SK-N-SH (cell line): ENCODE measurements at regions of chr10 and their contacts with region 1.

Region 1: GRCh38 chr10:70903262-70903921 is 15.0 kb upstream of the PCBD1 start:
- DNase-seq: peak; percentile 85
- H3K4me3 ChIP-seq: no peak overlapping the region; a peak in 1 of 4 replicates
- H3K27ac ChIP-seq: peak overlapping the region in 1 of 2 experiments; percentile 12; a peak in 1 of 4 replicates
- H3K4me1 ChIP-seq: peaks cover 0 to 8% of the 10 kb centered on the region in 2 experiments; a peak in 1 of 4 replicates
- H3K27me3 ChIP-seq: no peaks in the 10 kb centered on the region
- CTCF ChIP-seq: peak; percentile 88
- EP300 ChIP-seq: no peak
- RAD21 ChIP-seq: peak; percentile 91

Region 2: DNA sequence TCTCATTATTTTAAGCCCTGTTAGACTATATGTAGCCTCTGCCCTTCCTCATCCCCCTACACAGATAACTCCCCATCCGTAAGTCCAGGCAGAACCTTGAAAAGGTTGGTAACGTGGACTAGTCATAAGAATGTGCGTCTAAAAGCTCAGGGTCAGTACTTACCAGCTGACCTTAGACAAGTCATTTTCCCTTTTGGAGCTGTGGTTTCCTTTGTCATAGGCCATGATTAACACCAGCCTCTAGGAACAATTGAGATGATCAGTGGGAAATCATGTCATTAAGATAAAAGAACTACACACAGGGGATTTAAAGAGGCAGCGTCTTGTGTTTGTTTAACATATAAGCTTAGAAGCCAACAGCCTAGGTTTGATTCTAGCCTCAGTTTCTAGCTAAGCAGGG is 302.1 kb after region 1 on chr10:
- CTCF ChIA-PET with region 1: interaction called, 48 read pairs
- POLR2A ChIA-PET with region 1: no interaction called
- DNase-seq: no peak
- H3K4me3 ChIP-seq: no peak overlapping the region
- H3K27ac ChIP-seq: no peak overlapping the region
- H3K4me1 ChIP-seq: peaks cover 0 to 41% of the 10 kb centered on the region in 2 experiments; a peak in 2 of 4 replicates
- H3K27me3 ChIP-seq: peaks cover 7% of the 10 kb centered on the region; the same call in 1 of the 2 replicates
- CTCF ChIP-seq: no peak
- EP300 ChIP-seq: no peak
- RAD21 ChIP-seq: no peak

Region 3: GRCh38 chr10:71234970-71235685 is 331.7 kb after region 1 on chr10:
- CTCF ChIA-PET with region 1: interaction called, 19 read pairs
- POLR2A ChIA-PET with region 1: no interaction called
- DNase-seq: peak; percentile 83
- H3K4me3 ChIP-seq: peak overlapping the region; percentile 6 to 46; a peak in 3 of 4 replicates
- H3K27ac ChIP-seq: peak overlapping the region; percentile 94 to 100
- H3K4me1 ChIP-seq: peaks cover 82 to 97% of the 10 kb centered on the region in 2 experiments
- H3K27me3 ChIP-seq: no peaks in the 10 kb centered on the region
- CTCF ChIP-seq: no peak
- EP300 ChIP-seq: peak; percentile 84 to 98
- RAD21 ChIP-seq: peak; percentile 38; the same call in 1 of the 2 replicates

Region 4: DNA sequence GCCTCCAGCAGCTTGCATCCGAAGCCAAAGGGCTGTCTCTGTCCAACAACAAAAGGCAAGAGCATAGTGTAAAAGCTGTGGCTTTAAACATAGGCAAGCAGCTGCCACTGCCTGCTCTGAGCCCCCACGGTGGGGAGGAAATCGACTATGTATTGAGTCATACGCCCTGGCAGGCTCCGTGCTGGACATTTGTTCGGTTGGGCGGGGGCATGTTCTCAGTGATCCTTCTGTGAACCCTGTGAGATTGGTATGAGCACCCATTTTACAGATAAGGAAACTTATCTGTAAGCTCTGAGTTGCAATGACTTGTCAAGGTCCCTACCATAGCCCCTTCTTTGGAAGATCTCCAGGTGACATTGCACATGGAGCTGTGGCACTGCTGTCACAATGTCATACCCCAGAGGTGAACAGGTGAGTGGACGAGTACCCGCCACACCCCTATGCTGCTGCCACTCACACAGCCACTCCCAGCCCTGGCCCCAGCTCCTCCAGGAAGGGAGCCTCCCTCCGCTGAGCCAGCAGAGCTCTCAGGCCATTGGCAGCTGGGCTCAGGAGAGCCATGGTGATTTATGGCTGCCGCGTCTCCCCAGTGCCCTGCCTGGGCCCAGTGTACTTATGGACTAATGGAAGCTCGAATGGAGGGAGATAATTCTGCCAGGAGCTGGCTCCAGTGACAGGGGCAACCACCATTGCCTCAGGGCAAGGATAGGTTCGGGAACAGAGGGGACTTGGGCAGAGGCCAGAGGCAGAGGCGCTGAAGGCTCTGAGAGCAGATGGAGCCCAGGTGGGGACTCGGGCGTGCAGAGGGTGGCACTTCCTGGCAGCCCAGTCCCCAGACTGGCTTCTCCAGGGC is 352.6 kb after region 1 on chr10:
- CTCF ChIA-PET with region 1: interaction called, 16 read pairs
- POLR2A ChIA-PET with region 1: no interaction called
- DNase-seq: peak; percentile 74
- H3K4me3 ChIP-seq: no peak overlapping the region
- H3K27ac ChIP-seq: peak overlapping the region; percentile 53 to 100
- H3K4me1 ChIP-seq: peaks cover 56 to 97% of the 10 kb centered on the region in 2 experiments
- H3K27me3 ChIP-seq: no peaks in the 10 kb centered on the region
- CTCF ChIP-seq: no peak
- EP300 ChIP-seq: peak in 1 of 2 experiments; percentile 81; a peak in 3 of 4 replicates
- RAD21 ChIP-seq: 0 out of 2 replicates have a peak, but pooled peaks have one; percentile 20

Region 5: GRCh38 chr10:71270301-71271220 is 367.2 kb after region 1 on chr10:
- CTCF ChIA-PET with region 1: interaction called, 25 read pairs
- POLR2A ChIA-PET with region 1: no interaction called
- DNase-seq: peak; percentile 72
- H3K4me3 ChIP-seq: no peak overlapping the region; a peak in 1 of 4 replicates
- H3K27ac ChIP-seq: peak overlapping the region; percentile 68 to 96; a peak in 3 of 4 replicates
- H3K4me1 ChIP-seq: peaks cover 54 to 90% of the 10 kb centered on the region in 2 experiments
- H3K27me3 ChIP-seq: no peaks in the 10 kb centered on the region
- CTCF ChIP-seq: peak; percentile 65
- EP300 ChIP-seq: no peak
- RAD21 ChIP-seq: peak; percentile 77

Region 6: GRCh38 chr10:71285180-71285545 is 381.8 kb after region 1 on chr10:
- CTCF ChIA-PET with region 1: interaction called, 43 read pairs
- POLR2A ChIA-PET with region 1: no interaction called
- DNase-seq: peak; percentile 85
- H3K4me3 ChIP-seq: no peak overlapping the region
- H3K27ac ChIP-seq: no peak overlapping the region; a peak in 1 of 4 replicates
- H3K4me1 ChIP-seq: peaks cover 0 to 22% of the 10 kb centered on the region in 2 experiments; a peak in 2 of 4 replicates
- H3K27me3 ChIP-seq: no peaks in the 10 kb centered on the region
- CTCF ChIP-seq: peak; percentile 76
- EP300 ChIP-seq: no peak
- RAD21 ChIP-seq: peak; percentile 83